MCF 10A (cell line): ENCODE measurements at regions of chr20 and their contacts with region 1.

Region 1: GRCh38 chr20:13771853-13772453 is 12.8 kb downstream of the ESF1 start:
- DNase-seq: no peak
- H3K4me3 Mint-ChIP-seq: no peak overlapping the region
- H3K27ac Mint-ChIP-seq: peak overlapping the region; percentile 87
- H3K4me1 Mint-ChIP-seq: peaks cover 15% of the 10 kb centered on the region
- H3K27me3 Mint-ChIP-seq: no peaks in the 10 kb centered on the region
- CTCF ChIP-seq: peak; percentile 42

Region 2: GRCh38 chr20:12925214-12925755 is 846.7 kb before region 1 on chr20:
- CTCF ChIA-PET with region 1: interaction called, 10 read pairs
- POLR2A ChIA-PET with region 1: no interaction called
- intact Hi-C with region 1: no loop called
- DNase-seq: peak; percentile 78
- H3K4me3 Mint-ChIP-seq: no peak overlapping the region
- H3K27ac Mint-ChIP-seq: no peak overlapping the region
- H3K4me1 Mint-ChIP-seq: peaks cover 24% of the 10 kb centered on the region
- H3K27me3 Mint-ChIP-seq: no peaks in the 10 kb centered on the region
- CTCF ChIP-seq: peak; percentile 94

Region 3: DNA sequence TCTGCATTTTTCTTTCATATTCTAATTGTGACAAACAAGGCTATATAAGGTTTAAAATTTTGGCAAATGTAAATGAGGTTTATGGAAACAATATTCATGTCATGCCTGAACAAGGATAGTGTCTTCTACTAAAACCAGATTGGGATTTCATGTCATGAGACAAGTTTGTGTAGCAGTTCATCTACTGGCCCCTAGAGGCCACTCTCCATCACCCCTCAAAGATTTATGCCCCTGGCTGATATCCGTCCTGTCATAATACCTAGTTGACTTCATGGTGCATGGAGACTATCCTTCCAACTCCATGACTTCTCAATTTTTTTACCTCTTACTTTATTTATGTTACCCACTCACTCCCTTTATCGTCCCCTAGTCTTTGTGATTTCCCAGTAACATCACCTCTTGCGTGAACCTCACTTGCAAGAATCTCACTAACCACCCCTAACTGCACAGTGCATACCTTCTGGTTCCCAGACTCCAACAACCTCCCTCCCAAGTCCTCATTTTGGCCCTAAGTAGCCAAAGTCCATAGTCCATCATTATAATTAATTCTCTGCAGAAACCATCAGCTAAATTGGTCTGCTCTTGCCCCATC is 313.0 kb before region 1 on chr20:
- CTCF ChIA-PET with region 1: interaction called, 4 read pairs
- POLR2A ChIA-PET with region 1: no interaction called
- intact Hi-C with region 1: loop called (anchors 2 kb)
- DNase-seq: peak; percentile 56
- H3K4me3 Mint-ChIP-seq: no peak overlapping the region
- H3K27ac Mint-ChIP-seq: no peak overlapping the region
- H3K4me1 Mint-ChIP-seq: peaks cover 8% of the 10 kb centered on the region
- H3K27me3 Mint-ChIP-seq: no peaks in the 10 kb centered on the region
- CTCF ChIP-seq: peak; percentile 81

Region 4: DNA sequence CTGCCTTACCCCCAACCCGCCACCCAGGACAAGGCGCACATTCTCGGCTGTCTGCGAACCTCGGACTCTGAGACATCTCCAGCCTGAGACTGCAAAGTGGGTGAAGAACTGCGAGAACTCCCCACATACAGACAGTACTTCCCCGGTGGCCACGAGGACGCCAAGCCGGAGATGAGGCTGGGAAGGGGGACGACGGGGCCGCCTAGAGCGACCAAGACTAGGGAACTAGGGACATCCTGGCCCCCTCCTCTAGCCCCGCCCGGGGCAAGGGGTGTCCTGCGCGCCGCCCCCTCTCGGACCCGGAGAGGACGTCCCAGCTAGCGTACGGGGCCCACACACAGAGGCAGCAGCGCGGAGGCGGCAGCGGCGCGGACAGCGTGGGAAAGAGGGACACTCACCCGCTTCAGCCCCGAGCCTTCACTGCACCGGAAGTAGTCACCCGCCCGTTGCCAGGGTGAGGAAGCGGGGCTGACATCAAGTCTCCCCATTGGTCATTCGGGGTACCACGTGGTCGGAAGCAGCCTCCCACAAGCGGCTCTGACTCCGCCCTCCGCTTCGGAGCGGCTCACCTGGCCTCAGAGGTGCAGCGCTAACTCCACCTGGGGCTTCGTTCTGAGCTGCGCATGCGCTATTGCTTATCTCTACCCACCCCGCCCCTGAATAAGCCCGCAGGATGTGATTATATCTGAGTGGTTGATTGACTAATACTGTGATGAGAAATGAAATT is 133.3 kb before region 1 on chr20 and contains the start of gene TASP1:
- CTCF ChIA-PET with region 1: interaction called, 4 read pairs
- POLR2A ChIA-PET with region 1: interaction called, 14 read pairs
- intact Hi-C with region 1: loop called (anchors 10 kb)
- DNase-seq: peak; percentile 98
- H3K4me3 Mint-ChIP-seq: peak within 1 kb of the TSS; percentile 81
- H3K27ac Mint-ChIP-seq: peak within 1 kb of the TSS; percentile 77
- H3K4me1 Mint-ChIP-seq: peaks cover 4% of the 10 kb centered on the region
- H3K27me3 Mint-ChIP-seq: no peaks in the 10 kb centered on the region
- CTCF ChIP-seq: no peak
- total RNA-seq, gene TASP1: 18.7 and 19.0 TPM in 2 replicates

Region 5: GRCh38 chr20:13755809-13756208 is 16.1 kb before region 1 on chr20:
- CTCF ChIA-PET with region 1: interaction called, 22 read pairs
- POLR2A ChIA-PET with region 1: interaction called, 5 read pairs
- intact Hi-C with region 1: no loop called
- DNase-seq: no peak
- H3K4me3 Mint-ChIP-seq: no peak overlapping the region
- H3K27ac Mint-ChIP-seq: no peak overlapping the region
- H3K4me1 Mint-ChIP-seq: no peaks in the 10 kb centered on the region
- H3K27me3 Mint-ChIP-seq: no peaks in the 10 kb centered on the region
- CTCF ChIP-seq: no peak

Region 6: GRCh38 chr20:13784893-13785715 is 13.2 kb after region 1 on chr20 and contains the starts of genes ESF1 and NDUFAF5:
- CTCF ChIA-PET with region 1: interaction called, 31 read pairs
- POLR2A ChIA-PET with region 1: interaction called, 81 read pairs
- intact Hi-C with region 1: no loop called
- DNase-seq: peak; percentile 97
- H3K4me3 Mint-ChIP-seq: peak within 1 kb of the TSS; percentile 87
- H3K27ac Mint-ChIP-seq: peak within 1 kb of the TSS; percentile 99
- H3K4me1 Mint-ChIP-seq: peaks cover 41% of the 10 kb centered on the region
- H3K27me3 Mint-ChIP-seq: no peaks in the 10 kb centered on the region
- CTCF ChIP-seq: no peak
- total RNA-seq, gene ESF1: 17.4 and 21.2 TPM in 2 replicates
- total RNA-seq, gene NDUFAF5: 43.4 and 44.1 TPM in 2 replicates

Region 7: GRCh38 chr20:13791540-13792459 is 19.8 kb after region 1 on chr20:
- CTCF ChIA-PET with region 1: interaction called, 31 read pairs
- POLR2A ChIA-PET with region 1: interaction called, 81 read pairs
- intact Hi-C with region 1: no loop called
- DNase-seq: no peak
- H3K4me3 Mint-ChIP-seq: no peak overlapping the region
- H3K27ac Mint-ChIP-seq: peak overlapping the region; percentile 1
- H3K4me1 Mint-ChIP-seq: peaks cover 20% of the 10 kb centered on the region
- H3K27me3 Mint-ChIP-seq: no peaks in the 10 kb centered on the region
- CTCF ChIP-seq: no peak